ENCODE measurements at regions of chr3 and their contacts with region 1.

Region 1: GRCh38 chr3:21747376-21747775 is 3.6 kb downstream of the ZNF385D start:
- DNase-seq: no peak
- ATAC-seq: no peak
- H3K4me3 ChIP-seq: peak overlapping the region in 5 of 10 donors; percentile 19 to 71 (median 65)
- H3K27ac ChIP-seq: peak overlapping the region in 5 of 10 donors; percentile 36 to 65 (median 55)
- H3K4me1 ChIP-seq: peaks cover 0 to 71% (median 39%) of the 10 kb centered on the region in 9 donors
- H3K27me3 ChIP-seq: no peaks in the 10 kb centered on the region
- CTCF ChIP-seq: no peak

Region 2: DNA sequence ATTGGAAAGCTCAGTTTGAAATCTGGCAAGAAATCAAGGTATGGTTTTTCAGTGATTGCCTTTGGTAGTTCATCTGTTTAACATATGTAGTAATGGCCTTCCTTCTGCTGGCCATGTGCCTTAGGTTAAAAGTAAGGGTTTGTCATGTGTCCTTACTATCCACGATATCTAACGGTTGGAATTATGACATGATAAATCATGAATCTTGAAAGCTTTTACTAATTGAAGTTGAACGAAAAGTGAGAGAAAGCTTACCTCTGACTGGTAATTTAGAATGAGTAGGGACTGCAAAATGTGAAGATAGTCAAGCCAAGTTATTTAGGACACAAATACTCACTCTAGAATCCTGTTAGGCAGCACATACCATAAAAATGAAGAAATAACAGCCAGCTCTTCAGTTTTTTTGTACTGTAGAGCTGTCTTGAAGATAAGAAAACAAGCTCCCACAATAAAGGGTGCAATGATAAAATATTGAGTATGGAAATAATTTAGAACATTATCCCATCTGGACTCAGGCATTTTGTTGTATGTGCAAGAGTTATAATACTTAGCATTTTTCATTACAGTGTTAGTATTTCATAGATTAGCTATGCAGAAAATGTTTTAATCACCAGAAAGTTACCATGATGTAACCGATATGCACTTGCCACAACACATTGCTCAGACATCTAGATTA is 299.8 kb before region 1 on chr3:
- intact Hi-C with region 1: loop called in 1 of 10 experiments (anchors 10 kb)
- DNase-seq: no peak
- ATAC-seq: no peak
- H3K4me3 ChIP-seq: peak overlapping the region in 5 of 10 donors; percentile 3 to 25 (median 24)
- H3K27ac ChIP-seq: peak overlapping the region in 3 of 10 donors; percentile 3 to 42 (median 38)
- H3K4me1 ChIP-seq: peaks cover 0 to 41% (median 20%) of the 10 kb centered on the region in 9 donors
- H3K27me3 ChIP-seq: no peaks in the 10 kb centered on the region
- CTCF ChIP-seq: no peak

Region 3: DNA sequence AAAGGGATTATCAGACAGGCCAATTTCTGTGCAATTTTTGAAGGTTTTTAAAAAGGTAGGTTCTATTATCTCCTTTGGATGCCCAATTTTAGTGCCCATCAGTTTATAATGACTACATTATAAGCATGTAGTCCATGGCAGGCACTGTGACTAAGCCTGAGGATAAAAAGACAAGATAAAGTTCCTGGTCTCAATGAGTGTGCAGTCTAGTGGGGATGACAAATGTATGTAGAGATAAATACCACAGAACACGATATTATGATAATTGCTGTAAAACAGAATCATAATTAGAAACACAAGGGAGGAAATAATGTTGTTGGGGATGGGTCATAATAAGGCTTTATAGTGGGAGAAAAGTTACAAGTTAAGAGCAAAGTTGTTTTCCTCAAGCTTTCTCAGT is 159.5 kb before region 1 on chr3:
- intact Hi-C with region 1: no loop called
- DNase-seq: no peak
- ATAC-seq: no peak
- H3K4me3 ChIP-seq: no peak overlapping the region
- H3K27ac ChIP-seq: no peak overlapping the region
- H3K4me1 ChIP-seq: peaks cover 0 to 5% (median 0%) of the 10 kb centered on the region in 9 donors
- H3K27me3 ChIP-seq: no peaks in the 10 kb centered on the region
- CTCF ChIP-seq: no peak

Region 4: DNA sequence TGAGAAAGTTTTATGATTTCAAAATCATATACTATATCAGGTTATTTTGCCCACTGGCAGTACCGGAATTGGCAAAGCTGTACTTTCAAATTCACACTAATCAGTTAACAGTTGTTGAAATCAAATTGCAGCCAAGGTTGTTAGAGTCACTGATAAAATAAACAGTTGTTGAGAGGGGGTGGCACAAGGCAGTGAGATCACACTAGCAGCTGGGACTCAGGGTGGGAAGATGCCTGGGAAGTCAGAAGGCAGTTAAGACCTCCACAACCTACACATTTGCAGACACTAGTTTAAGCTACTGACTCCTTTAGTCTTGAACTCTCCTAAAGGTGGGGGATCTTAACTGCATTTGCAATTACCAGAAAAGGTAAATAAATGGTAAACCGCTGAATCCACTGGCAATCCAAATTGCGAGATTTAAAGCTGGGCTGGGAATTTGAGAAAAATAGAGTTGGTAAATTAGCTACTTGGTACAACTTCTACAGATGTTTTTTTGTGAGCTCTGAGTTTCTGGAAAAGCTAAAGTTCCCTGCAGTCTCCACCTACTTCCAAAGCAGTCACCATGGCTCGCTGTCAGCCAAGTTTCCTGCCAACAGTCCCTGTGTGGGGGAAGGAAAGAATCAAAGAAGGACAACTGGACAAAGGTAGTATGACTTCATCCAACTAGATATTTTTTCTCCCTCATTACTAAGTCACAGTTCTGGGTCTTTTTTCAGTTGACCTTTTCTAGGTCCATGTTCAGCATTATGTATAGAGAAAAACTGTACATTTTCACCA is 102.1 kb before region 1 on chr3:
- intact Hi-C with region 1: loop called in 1 of 10 experiments (anchors 5 kb)
- DNase-seq: peak; percentile 58 to 82
- ATAC-seq: peak; percentile 83 to 97 (median 94)
- H3K4me3 ChIP-seq: peak overlapping the region in 3 of 10 donors; percentile 0 to 9 (median 6)
- H3K27ac ChIP-seq: peak overlapping the region; percentile 23 to 84 (median 75)
- H3K4me1 ChIP-seq: peaks cover 4 to 53% (median 31%) of the 10 kb centered on the region in 9 donors
- H3K27me3 ChIP-seq: no peaks in the 10 kb centered on the region
- CTCF ChIP-seq: no peak

Region 5: DNA sequence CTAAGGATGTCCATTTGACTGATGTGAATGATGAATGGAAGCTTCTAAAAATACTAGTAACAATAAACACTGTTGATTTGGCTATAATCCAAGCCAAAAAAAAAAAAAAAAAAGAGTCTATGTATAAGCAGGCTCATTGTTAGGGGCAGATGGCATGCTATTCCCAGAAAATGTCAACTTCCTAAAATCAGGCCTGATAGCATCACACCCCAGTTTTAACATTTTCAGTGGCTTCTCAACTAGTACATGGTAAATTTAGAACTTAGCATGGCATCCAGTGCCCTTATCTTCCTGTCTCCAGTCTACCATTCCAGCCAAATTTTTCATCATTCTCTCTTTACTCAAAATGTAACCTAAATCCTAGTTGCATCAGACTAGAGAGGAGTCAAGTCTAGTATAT is 291.8 kb after region 1 on chr3:
- intact Hi-C with region 1: no loop called
- DNase-seq: no peak
- ATAC-seq: no peak
- H3K4me3 ChIP-seq: no peak overlapping the region
- H3K27ac ChIP-seq: no peak overlapping the region
- H3K4me1 ChIP-seq: no peaks in the 10 kb centered on the region
- H3K27me3 ChIP-seq: no peaks in the 10 kb centered on the region
- CTCF ChIP-seq: no peak

Region 6: GRCh38 chr3:22063500-22063899 is 316.1 kb after region 1 on chr3:
- intact Hi-C with region 1: no loop called
- DNase-seq: no peak
- ATAC-seq: no peak
- H3K4me3 ChIP-seq: no peak overlapping the region
- H3K27ac ChIP-seq: no peak overlapping the region
- H3K4me1 ChIP-seq: no peaks in the 10 kb centered on the region
- H3K27me3 ChIP-seq: no peaks in the 10 kb centered on the region
- CTCF ChIP-seq: no peak